Kidney (tissue), 22 donors: ENCODE measurements at regions of chr3 and their contacts with region 1.

Region 1: DNA sequence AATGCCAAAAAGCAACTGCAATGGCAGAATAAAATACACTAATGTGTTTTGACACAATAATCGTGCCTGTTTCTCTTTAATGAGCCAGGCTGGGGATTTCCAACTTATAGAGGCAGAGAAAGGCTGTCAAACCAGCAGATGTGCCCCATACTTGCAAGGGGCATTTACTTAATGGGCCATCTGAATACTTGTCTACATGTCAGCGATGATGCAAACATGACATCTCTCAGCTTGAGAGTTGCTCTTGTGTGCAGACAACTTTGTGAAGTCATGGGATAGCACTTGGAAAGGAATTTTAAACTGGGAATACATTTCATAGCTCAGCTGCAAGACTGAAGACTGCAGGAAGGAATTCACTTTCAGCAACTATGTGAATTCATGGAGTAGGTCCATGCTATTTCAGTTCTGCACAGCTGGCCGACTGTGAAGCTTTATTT is 127.4 kb upstream of the ADAMTS9 start:
- DNase-seq: peak in 3 of 5 donors; percentile 18 to 82 (median 63)
- H3K4me3 ChIP-seq: no peak overlapping the region
- H3K27ac ChIP-seq: no peak overlapping the region
- H3K4me1 ChIP-seq: peaks cover 0 to 7% (median 0%) of the 10 kb centered on the region in 3 donors
- H3K27me3 ChIP-seq: no peaks in the 10 kb centered on the region
- CTCF ChIP-seq: no peak

Region 2: DNA sequence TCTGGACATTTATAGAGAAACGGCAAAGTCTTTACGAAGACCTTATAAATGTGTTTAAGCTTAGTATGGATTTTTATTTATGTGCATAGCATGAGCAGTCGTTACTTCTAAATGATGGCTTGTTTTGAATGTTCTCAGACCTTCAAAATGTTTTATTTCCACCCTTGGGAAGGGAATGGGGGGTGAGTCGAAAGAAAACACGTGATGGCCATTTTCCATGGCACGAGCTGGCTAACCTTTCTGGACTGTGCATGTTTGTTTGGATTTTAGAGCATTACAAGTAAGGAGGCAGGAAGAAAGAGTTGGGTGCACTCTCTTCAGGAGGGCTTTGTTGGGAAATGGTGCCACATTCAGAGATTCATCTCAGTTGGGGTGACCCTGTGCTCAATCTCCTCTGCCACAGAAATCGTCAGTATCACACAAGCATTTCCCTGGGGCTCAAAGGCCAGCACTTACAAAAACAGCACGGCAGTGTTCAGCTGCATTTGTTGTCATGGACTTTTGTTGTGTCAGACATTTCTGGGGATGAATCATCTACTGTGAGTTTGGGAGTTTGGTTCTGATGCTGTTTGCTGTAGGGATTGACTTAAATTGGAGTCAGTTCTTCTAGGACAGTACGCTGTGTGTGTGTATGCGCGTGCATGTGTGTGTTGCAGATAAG is 75.1 kb before region 1 on chr3:
- intact Hi-C with region 1: loop called (anchors 10 kb)
- DNase-seq: peak in 2 of 5 donors; percentile 36 to 59
- H3K4me3 ChIP-seq: no peak overlapping the region
- H3K27ac ChIP-seq: no peak overlapping the region
- H3K4me1 ChIP-seq: peaks cover 0 to 3% (median 0%) of the 10 kb centered on the region in 3 donors
- H3K27me3 ChIP-seq: no peaks in the 10 kb centered on the region
- CTCF ChIP-seq: no peak

Region 3: DNA sequence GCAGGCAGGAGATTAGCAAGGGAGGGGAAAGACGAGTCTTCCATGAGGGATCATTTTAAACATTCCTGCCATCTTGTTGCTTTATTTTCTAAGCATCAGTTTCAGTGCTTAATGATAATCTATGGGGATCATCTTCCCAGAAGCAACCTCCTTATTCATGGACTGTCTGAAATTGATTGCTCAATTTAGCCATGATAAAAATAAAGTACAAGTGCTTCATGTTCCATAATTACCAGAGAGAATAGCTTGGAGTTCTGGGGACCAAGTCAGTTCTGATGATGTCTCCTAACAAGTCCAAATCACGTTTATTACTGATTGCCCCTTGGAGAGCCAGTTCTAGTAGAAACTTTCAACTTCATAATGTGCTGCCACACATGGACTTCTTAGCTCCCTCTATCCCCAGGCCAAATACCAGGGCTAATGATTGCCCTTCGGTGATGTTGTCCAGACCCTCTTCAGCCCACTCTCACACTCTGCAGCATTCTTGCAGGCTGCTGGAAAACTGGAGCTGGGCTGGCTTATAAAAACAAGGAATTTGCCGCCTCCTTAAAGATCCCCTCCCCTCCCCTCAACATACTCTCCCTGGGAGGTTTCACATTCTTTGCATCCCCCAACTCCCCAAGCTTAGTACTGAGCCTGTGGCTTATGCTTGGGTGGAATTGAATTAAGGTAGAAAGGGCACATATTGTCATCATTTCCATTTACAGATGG is 94.7 kb after region 1 on chr3:
- intact Hi-C with region 1: loop called (anchors 5 kb)
- DNase-seq: peak in 1 of 5 donors; percentile 34
- H3K4me3 ChIP-seq: no peak overlapping the region
- H3K27ac ChIP-seq: no peak overlapping the region
- H3K4me1 ChIP-seq: peaks cover 0 to 4% (median 0%) of the 10 kb centered on the region in 3 donors
- H3K27me3 ChIP-seq: no peaks in the 10 kb centered on the region
- CTCF ChIP-seq: no peak